ENCODE measurements at regions of chr17 and their contacts with region 1.

Region 1: GRCh38 chr17:31216053-31216751 is 80.8 kb downstream of the OMG start:
- DNase-seq: no peak
- ATAC-seq: no peak
- H3K4me3 Mint-ChIP-seq: no peak overlapping the region
- H3K27ac Mint-ChIP-seq: no peak overlapping the region
- H3K4me1 Mint-ChIP-seq: no peaks in the 10 kb centered on the region
- H3K27me3 Mint-ChIP-seq: no peaks in the 10 kb centered on the region

Region 2: DNA sequence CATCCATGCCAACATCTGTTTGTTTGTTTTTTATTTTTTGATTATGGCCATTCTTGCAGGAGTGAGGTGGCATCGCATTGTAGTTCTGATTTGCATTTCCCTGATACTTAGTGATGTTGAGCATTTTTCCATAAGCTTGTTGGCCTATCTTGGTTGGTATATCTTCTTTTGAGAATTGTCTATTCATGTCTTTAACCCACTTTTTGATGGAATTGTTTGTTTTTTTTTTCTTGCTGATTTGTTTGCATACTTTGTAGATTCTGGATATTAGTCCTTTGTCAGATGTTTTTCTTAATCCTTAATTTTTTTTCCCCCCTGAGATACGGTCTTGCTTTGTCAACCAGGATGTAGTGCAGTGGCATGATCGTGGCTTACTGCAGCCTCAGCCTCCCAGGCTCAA is 202.4 kb before region 1 on chr17:
- CTCF ChIA-PET with region 1: interaction called, 16 read pairs
- POLR2A ChIA-PET with region 1: no interaction called
- DNase-seq: no peak
- ATAC-seq: no peak
- H3K4me3 Mint-ChIP-seq: no peak overlapping the region
- H3K27ac Mint-ChIP-seq: no peak overlapping the region
- H3K4me1 Mint-ChIP-seq: peaks cover 5% of the 10 kb centered on the region
- H3K27me3 Mint-ChIP-seq: peaks cover 20% of the 10 kb centered on the region

Region 3: GRCh38 chr17:31099016-31099415 is 117.2 kb before region 1 on chr17:
- CTCF ChIA-PET with region 1: interaction called, 10 read pairs
- POLR2A ChIA-PET with region 1: no interaction called
- DNase-seq: no peak
- ATAC-seq: no peak
- H3K4me3 Mint-ChIP-seq: no peak overlapping the region
- H3K27ac Mint-ChIP-seq: no peak overlapping the region
- H3K4me1 Mint-ChIP-seq: peaks cover 11% of the 10 kb centered on the region
- H3K27me3 Mint-ChIP-seq: no peaks in the 10 kb centered on the region

Region 4: GRCh38 chr17:31197991-31198390 is 18.2 kb before region 1 on chr17:
- CTCF ChIA-PET with region 1: interaction called, 10 read pairs
- POLR2A ChIA-PET with region 1: no interaction called
- DNase-seq: no peak
- ATAC-seq: no peak
- H3K4me3 Mint-ChIP-seq: no peak overlapping the region
- H3K27ac Mint-ChIP-seq: no peak overlapping the region
- H3K4me1 Mint-ChIP-seq: no peaks in the 10 kb centered on the region
- H3K27me3 Mint-ChIP-seq: no peaks in the 10 kb centered on the region

Region 5: GRCh38 chr17:31226373-31226772 is 10.2 kb after region 1 on chr17:
- CTCF ChIA-PET with region 1: interaction called, 13 read pairs
- POLR2A ChIA-PET with region 1: no interaction called
- DNase-seq: peak; percentile 27
- ATAC-seq: no peak
- H3K4me3 Mint-ChIP-seq: no peak overlapping the region
- H3K27ac Mint-ChIP-seq: no peak overlapping the region
- H3K4me1 Mint-ChIP-seq: peaks cover 13% of the 10 kb centered on the region
- H3K27me3 Mint-ChIP-seq: no peaks in the 10 kb centered on the region

Region 6: DNA sequence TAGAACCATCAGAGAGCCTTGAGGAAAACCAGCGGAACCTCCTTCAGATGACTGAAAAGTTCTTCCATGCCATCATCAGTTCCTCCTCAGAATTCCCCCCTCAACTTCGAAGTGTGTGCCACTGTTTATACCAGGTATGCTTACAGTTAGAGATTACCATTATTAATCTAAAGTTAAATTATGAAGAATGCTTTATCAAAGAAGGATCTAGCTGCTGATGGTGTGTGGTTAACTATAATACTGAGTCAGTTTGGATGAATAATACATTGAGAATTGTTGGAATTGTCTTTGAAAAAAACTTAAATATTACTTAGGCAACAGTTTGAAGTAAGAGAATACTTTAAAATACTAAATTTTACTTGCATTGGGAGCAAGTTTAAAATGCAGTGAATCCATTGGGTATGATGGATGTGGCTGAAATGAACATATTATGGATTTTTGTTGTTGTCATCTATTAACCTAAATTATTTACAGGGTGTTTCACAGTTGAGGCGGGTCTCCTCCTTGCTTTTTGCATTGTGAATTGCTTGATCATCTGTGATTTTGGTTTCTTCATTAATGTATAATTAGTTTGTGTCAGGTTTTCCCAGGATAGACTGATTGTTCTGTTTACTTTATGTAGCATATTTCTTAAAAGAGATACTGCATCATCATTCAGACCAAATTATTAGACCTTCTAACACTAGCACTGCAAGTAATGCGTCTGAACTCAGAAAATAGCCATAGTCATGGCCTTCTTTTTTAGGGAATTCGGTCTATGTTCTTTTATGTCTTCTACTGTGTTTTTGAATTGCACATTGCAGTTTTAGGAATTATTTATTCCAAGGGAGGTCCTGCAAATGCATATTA is 33.0 kb after region 1 on chr17:
- CTCF ChIA-PET with region 1: interaction called, 12 read pairs
- POLR2A ChIA-PET with region 1: no interaction called
- DNase-seq: no peak
- ATAC-seq: no peak
- H3K4me3 Mint-ChIP-seq: no peak overlapping the region
- H3K27ac Mint-ChIP-seq: no peak overlapping the region
- H3K4me1 Mint-ChIP-seq: peaks cover 2% of the 10 kb centered on the region
- H3K27me3 Mint-ChIP-seq: no peaks in the 10 kb centered on the region

Region 7: DNA sequence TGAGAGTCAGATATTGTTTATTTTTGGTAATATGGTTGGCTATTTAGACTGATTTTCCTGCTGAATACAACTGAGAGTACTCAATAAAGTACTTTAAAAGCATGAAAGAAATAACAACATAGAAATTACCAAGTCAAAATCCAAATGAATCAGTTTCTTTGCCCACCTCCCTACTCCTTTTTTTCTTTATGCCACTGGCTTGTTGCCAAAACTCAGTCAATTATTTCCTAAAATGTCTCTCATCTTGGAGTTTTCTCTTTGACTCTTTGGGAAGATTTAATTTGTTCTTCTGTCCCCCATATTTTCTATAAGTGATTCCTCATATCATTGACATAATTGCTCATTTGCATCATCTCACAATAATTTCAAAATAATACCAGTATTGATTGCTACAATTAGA is 83.4 kb after region 1 on chr17:
- CTCF ChIA-PET with region 1: no interaction called
- POLR2A ChIA-PET with region 1: no interaction called
- DNase-seq: no peak
- ATAC-seq: no peak
- H3K4me3 Mint-ChIP-seq: no peak overlapping the region
- H3K27ac Mint-ChIP-seq: no peak overlapping the region
- H3K4me1 Mint-ChIP-seq: peaks cover 14% of the 10 kb centered on the region
- H3K27me3 Mint-ChIP-seq: no peaks in the 10 kb centered on the region

Region 8: GRCh38 chr17:31373150-31374093 is 157.2 kb after region 1 on chr17:
- CTCF ChIA-PET with region 1: interaction called, 14 read pairs
- POLR2A ChIA-PET with region 1: no interaction called
- DNase-seq: peak; percentile 60
- ATAC-seq: peak; percentile 93
- H3K4me3 Mint-ChIP-seq: no peak overlapping the region
- H3K27ac Mint-ChIP-seq: no peak overlapping the region
- H3K4me1 Mint-ChIP-seq: peaks cover 16% of the 10 kb centered on the region
- H3K27me3 Mint-ChIP-seq: no peaks in the 10 kb centered on the region